T-cell (primary cell): ENCODE measurements at regions of chr14 and their contacts with region 1.

Region 1: GRCh38 chr14:51901475-51902024 is 41.1 kb downstream of the GNG2 start:
- DNase-seq: peak in 21 of 35 experiments; percentile 7 to 59 (median 25)
- ATAC-seq: peak; percentile 71 to 90 (median 77)
- H3K4me3 ChIP-seq: no peak overlapping the region
- H3K4me3 Mint-ChIP-seq: peak overlapping the region in 1 of 3 donors; percentile 29
- H3K27ac ChIP-seq: no peak overlapping the region
- H3K27ac Mint-ChIP-seq: peak overlapping the region; percentile 58 to 76
- H3K4me1 ChIP-seq: peaks cover 10 to 27% of the 10 kb centered on the region in 2 experiments
- H3K4me1 Mint-ChIP-seq: peaks cover 68 to 85% (median 80%) of the 10 kb centered on the region in 3 donors
- H3K27me3 ChIP-seq: no peaks in the 10 kb centered on the region
- H3K27me3 Mint-ChIP-seq: no peaks in the 10 kb centered on the region

Region 2: DNA sequence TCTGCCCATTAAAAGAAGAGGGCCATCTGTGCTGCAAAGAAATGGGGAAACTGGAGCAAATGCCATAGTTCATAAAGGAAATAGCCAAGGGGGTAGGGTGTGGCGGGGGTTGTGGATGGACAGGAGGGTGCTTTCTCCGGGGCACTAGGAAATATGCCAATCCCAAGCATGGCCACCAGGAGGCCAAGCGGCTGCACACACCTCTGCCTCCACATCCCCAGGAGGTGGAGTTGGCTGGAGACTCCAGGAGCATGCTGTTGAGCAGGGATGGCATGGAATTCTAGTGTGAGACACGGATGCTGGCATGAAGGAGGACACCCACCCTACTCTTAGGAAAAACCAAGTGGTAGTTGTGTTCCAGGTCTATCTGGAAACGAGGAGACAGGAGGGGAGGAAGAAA is 142.1 kb after region 1 on chr14:
- CTCF ChIA-PET with region 1: no interaction called
- POLR2A ChIA-PET with region 1: no interaction called
- DNase-seq: peak in 26 of 35 experiments; percentile 4 to 61 (median 24)
- ATAC-seq: no peak
- H3K4me3 ChIP-seq: no peak overlapping the region
- H3K4me3 Mint-ChIP-seq: no peak overlapping the region
- H3K27ac ChIP-seq: no peak overlapping the region
- H3K27ac Mint-ChIP-seq: no peak overlapping the region
- H3K4me1 ChIP-seq: no peaks in the 10 kb centered on the region
- H3K4me1 Mint-ChIP-seq: peaks cover 0 to 4% (median 0%) of the 10 kb centered on the region in 3 donors
- H3K27me3 ChIP-seq: peaks cover 0 to 6% of the 10 kb centered on the region in 2 experiments
- H3K27me3 Mint-ChIP-seq: peaks cover 3 to 4% of the 10 kb centered on the region in 2 donors

Region 3: DNA sequence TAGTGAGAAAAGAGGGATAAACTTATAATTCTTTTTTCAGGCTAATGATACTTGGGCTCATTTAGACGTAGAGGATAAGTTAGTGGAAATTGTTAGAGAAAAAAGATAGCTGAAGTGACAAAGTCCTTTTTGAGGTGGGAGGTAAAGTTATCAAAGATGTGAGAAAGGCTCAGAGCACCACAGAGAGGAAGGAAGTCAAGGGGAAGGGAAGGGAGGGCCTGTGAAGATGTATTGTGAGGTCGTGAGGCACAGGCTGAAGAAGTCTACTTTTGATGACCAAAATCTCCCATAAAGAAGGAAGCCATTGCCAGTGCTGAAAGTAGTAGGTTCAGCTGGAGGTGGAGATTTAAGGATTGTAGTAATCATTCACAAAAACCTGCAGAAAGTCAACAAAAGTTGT is 346.5 kb after region 1 on chr14:
- CTCF ChIA-PET with region 1: no interaction called
- POLR2A ChIA-PET with region 1: interaction called in 1 of 2 experiments, 11 read pairs
- DNase-seq: peak in 5 of 35 experiments; percentile 2 to 52 (median 9)
- ATAC-seq: peak; percentile 75 to 97 (median 92)
- H3K4me3 ChIP-seq: no peak overlapping the region
- H3K4me3 Mint-ChIP-seq: peak overlapping the region in 1 of 3 donors; percentile 49
- H3K27ac ChIP-seq: peak overlapping the region; percentile 68
- H3K27ac Mint-ChIP-seq: peak overlapping the region; percentile 80 to 86
- H3K4me1 ChIP-seq: peaks cover 7 to 22% of the 10 kb centered on the region in 2 experiments
- H3K4me1 Mint-ChIP-seq: peaks cover 23 to 25% (median 23%) of the 10 kb centered on the region in 3 donors
- H3K27me3 ChIP-seq: no peaks in the 10 kb centered on the region
- H3K27me3 Mint-ChIP-seq: peaks cover 0 to 1% of the 10 kb centered on the region in 2 donors